Activated CD4-positive, alpha-beta memory T cell treated with anti-CD3 and anti-CD28 coated beads for 36 hours (primary cell): ENCODE measurements at regions of chr14 and their contacts with region 1.

Region 1: DNA sequence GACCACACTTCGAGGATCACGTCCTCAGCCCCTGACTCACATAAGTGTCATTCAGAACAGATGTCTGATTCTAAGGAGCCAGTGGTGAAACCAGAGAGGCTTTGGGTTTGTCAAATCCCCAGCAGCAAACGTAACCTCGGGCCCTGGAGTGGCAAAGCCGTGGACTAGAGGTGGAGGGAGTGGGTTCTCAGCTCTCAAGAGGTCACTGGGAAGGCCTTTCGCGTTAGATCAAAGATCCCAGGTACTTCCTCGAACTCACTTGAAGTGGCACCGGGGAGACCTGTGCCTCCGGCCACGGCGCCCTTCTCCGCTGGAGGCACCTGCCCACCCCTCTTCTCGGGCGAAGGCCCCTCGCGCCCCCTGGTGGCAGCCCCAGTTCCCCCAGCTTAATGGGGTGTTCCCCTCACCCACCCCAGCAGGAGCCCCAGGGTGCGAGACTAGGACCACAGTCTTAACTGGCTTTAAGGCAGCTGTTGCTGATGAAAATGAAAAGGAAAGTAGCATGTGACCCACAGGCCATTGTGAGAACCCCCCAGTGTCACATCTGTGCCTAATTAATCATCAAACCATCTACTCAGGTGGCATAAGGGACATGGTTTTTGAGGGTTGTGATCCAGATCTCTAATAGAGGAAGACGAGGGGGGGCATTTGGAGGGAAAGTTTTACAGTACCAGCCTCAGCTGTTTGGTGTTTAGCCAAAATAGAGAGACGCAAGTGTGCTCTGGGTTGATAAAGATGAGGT is 672 bp upstream of the ESR2 start:
- DNase-seq: peak; percentile 91
- H3K4me3 Mint-ChIP-seq: peak overlapping the region; percentile 70
- H3K27ac Mint-ChIP-seq: no peak overlapping the region
- H3K4me1 Mint-ChIP-seq: peaks cover 29% of the 10 kb centered on the region
- H3K27me3 Mint-ChIP-seq: peaks cover 14% of the 10 kb centered on the region

Region 2: DNA sequence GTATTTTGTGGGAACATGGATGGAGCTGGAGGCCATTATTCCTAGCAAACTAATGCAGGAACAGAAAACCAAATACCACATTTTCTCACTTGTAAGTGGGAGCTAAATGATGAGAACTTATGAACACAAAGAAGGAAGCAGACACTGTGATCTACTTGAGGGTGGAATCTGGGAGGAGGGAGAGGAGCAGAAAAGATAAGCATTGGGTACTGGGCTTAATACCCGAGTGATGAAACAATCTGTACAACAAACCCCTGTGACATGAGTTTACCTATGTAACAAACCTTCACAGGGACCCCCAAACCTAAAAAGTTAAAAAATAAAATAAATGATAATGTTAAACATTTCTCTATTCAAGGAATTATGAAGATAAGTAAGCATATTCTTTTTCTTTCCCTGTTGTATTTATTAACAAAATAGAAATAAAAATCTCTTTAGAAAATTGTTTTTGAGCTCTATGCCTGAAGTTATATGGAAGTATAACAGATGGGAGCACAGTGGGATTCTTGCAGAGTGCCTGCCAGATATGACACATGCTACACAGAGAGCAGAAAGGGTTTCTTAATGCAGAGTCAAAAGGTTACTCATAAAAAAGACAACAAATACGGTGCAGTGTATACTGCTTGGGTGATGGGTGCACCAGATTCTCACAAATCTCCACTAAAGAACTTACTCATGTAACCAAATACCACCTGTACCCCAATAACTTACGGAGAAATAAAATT is 494.0 kb before region 1 on chr14:
- CTCF ChIA-PET with region 1: interaction called, 8 read pairs
- POLR2A ChIA-PET with region 1: no interaction called
- intact Hi-C with region 1: loop called (anchors 2 kb)
- DNase-seq: no peak
- H3K4me3 Mint-ChIP-seq: no peak overlapping the region
- H3K27ac Mint-ChIP-seq: no peak overlapping the region
- H3K4me1 Mint-ChIP-seq: no peaks in the 10 kb centered on the region
- H3K27me3 Mint-ChIP-seq: no peaks in the 10 kb centered on the region

Region 3: DNA sequence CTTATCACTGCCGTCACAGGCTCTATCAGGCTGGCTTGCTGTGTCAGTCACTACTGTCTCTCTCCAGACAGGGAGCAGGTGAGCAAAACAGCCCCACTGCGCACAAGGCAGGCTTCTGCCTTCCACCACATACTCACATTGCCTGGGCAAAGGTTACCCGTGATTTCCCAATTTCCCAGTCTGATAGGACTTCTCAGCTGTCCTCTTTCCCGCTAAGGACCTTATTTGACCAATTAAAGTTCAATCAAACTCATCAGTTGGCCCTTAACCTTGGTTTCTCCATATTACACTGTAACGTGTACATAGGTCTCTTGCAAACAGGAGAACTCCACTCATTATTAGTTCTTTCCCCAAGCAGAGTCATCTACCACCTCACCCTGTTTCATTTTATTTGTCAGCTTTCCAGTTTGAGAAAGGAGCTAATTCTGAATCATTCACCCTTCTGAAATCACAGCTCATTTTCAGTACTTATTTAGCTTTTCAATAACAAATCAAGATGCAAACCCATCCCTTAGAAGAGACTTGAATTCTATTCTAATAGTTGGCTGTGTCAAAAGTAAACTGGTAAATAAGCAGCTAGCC is 171.5 kb before region 1 on chr14:
- CTCF ChIA-PET with region 1: interaction called, 10 read pairs
- POLR2A ChIA-PET with region 1: no interaction called
- intact Hi-C with region 1: no loop called
- DNase-seq: no peak
- H3K4me3 Mint-ChIP-seq: no peak overlapping the region
- H3K27ac Mint-ChIP-seq: peak overlapping the region; percentile 64
- H3K4me1 Mint-ChIP-seq: peaks cover 16% of the 10 kb centered on the region
- H3K27me3 Mint-ChIP-seq: no peaks in the 10 kb centered on the region

Region 4: DNA sequence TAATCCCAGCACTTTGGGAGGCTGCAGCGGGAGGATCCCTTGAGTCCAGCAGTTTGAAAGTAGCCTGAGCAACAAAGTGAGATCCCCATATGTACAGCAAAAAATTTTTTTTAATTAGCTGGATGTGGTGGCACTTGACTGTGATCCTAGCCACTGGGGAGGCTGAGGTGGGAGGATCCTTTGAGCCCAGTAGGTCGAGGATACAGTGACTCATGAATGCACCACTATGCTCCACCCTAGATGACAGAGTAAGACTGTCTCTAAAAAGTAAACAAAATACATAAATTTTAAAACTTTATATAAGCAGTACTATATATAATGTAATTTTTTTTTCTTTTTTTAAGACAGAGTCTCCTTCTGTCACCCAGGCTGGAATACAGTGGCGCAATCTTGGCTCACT is 116.0 kb before region 1 on chr14:
- CTCF ChIA-PET with region 1: interaction called, 12 read pairs
- POLR2A ChIA-PET with region 1: interaction called, 3 read pairs
- intact Hi-C with region 1: no loop called
- DNase-seq: no peak
- H3K4me3 Mint-ChIP-seq: no peak overlapping the region
- H3K27ac Mint-ChIP-seq: no peak overlapping the region
- H3K4me1 Mint-ChIP-seq: peaks cover 29% of the 10 kb centered on the region
- H3K27me3 Mint-ChIP-seq: no peaks in the 10 kb centered on the region

Region 5: GRCh38 chr14:65658202-65658601 is 1363.4 kb after region 1 on chr14:
- CTCF ChIA-PET with region 1: no interaction called
- POLR2A ChIA-PET with region 1: no interaction called
- intact Hi-C with region 1: no loop called
- DNase-seq: no peak
- H3K4me3 Mint-ChIP-seq: no peak overlapping the region
- H3K27ac Mint-ChIP-seq: no peak overlapping the region
- H3K4me1 Mint-ChIP-seq: no peaks in the 10 kb centered on the region
- H3K27me3 Mint-ChIP-seq: no peaks in the 10 kb centered on the region